A549 (cell line): ENCODE measurements at regions of chr19 and their contacts with region 1.

Region 1: GRCh38 chr19:6862673-6863078 is 24.7 kb upstream of the ADGRE1 start:
- DNase-seq: peak; percentile 73 to 87
- ATAC-seq: peak; percentile 93 to 98
- H3K4me3 ChIP-seq: peak overlapping the region; percentile 47
- H3K27ac ChIP-seq: peak overlapping the region; percentile 65 to 83
- H3K4me1 ChIP-seq: 0 out of 3 replicates have a peak, but pooled peaks cover 6% of the 10 kb centered on the region
- CTCF ChIP-seq: peak; percentile 71
- EP300 ChIP-seq: no peak
- POLR2A ChIP-seq: no peak
- RAD21 ChIP-seq: peak; percentile 92 to 93

Region 2: DNA sequence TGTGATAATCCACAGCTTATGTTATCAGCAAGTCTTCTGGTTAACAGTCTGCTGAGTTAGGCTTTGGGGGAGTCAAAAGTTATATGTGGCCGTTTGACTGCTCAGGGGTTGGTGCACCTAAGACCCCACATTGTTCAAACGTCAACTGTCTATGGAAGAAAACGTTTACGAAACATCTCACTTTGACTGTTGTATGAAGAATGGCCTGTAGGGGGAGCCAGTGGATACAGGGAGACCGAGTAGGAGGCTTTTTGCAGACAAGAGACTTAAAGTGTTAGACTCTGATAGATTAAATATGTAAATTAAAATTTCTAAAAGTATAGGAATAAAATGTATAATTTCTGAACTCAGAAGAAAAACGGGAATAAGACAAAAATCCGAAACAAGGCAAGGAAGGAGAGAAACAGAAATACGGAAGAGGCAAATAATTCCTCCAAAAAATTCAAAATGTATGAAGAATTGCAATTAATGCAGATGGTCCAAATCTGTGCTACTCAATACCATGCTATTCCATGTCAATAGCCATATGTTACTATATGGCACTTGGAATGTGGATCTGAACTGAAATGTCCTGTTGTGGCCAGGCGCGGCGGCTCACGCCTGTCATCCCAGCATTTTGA is 230.6 kb before region 1 on chr19:
- CTCF ChIA-PET with region 1: interaction called, 31 read pairs
- POLR2A ChIA-PET with region 1: no interaction called
- DNase-seq: peak; percentile 25 to 79
- ATAC-seq: peak; percentile 71 to 80; a peak in 5 of 6 replicates
- H3K4me3 ChIP-seq: no peak overlapping the region
- H3K27ac ChIP-seq: no peak overlapping the region
- H3K4me1 ChIP-seq: no peaks in the 10 kb centered on the region
- CTCF ChIP-seq: peak; percentile 71
- EP300 ChIP-seq: no peak
- POLR2A ChIP-seq: no peak
- RAD21 ChIP-seq: peak; percentile 55 to 73; a peak in 4 of 5 replicates

Region 3: DNA sequence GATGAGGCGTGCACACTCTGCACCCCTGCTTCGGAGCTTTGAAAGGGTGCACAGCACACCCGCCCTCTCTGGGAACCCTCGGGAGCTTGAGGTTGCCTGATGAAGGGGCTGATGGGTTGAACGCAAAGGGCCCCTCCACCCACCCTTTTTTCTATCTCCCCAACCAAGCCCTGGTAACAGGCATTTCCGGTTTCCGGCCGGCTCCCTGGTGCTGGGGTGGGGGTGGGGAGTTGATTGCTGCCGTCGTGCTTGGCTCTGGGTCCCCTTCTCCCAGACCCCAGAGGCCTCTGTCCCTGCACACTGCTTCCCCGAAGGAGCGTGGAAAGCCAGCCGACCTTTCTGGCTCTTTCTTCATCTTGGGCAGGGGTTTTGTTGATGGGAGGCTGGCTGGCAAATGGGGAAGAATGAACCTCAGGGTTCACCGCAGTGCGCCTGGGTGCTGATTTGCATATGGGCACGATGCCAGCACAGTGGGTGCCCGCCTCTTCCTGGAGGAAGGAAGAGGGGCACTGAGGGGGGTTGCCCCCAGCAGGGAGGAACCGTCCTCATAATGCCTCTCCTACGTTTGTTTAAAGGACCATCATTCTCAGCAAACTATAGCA is 61.1 kb before region 1 on chr19:
- CTCF ChIA-PET with region 1: interaction called, 13 read pairs
- POLR2A ChIA-PET with region 1: interaction called, 6 read pairs
- DNase-seq: peak; percentile 53 to 87
- ATAC-seq: peak; percentile 78 to 90
- H3K4me3 ChIP-seq: peak overlapping the region; percentile 44
- H3K27ac ChIP-seq: peak overlapping the region; percentile 92 to 100
- H3K4me1 ChIP-seq: peaks cover 24% of the 10 kb centered on the region
- CTCF ChIP-seq: no peak
- EP300 ChIP-seq: no peak
- POLR2A ChIP-seq: peak; percentile 8; the same call in 1 of the 2 replicates
- RAD21 ChIP-seq: no peak

Region 4: GRCh38 chr19:6876748-6877147 is 14.1 kb after region 1 on chr19:
- CTCF ChIA-PET with region 1: interaction called, 17 read pairs
- POLR2A ChIA-PET with region 1: no interaction called
- DNase-seq: no peak
- ATAC-seq: no peak
- H3K4me3 ChIP-seq: no peak overlapping the region
- H3K27ac ChIP-seq: no peak overlapping the region
- H3K4me1 ChIP-seq: no peaks in the 10 kb centered on the region
- CTCF ChIP-seq: no peak
- EP300 ChIP-seq: no peak
- POLR2A ChIP-seq: no peak
- RAD21 ChIP-seq: no peak